Posterior vena cava (tissue), 2 donors: ENCODE measurements at regions of chr14 and their contacts with region 1.

Region 1: DNA sequence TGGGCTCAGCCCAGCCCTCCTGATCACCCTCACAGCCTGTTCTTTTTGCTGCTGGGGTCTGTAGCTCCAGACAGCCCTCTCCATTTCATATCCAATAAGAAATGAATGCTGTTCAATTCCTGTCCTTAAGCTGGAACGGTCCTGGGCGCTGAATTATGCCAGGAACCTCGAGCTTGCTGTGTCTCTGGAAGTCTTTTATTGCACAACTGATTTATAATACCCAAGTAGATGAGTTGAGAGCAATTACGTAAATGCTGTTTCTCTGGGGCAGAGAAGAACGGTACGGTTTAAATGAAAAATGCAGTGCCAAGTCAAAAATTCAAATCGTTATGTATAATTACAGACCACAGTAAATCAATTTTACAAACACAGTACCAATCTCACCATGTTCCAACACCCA is 161.0 kb downstream of the SAMD4A start:
- DNase-seq: no peak

Region 2: DNA sequence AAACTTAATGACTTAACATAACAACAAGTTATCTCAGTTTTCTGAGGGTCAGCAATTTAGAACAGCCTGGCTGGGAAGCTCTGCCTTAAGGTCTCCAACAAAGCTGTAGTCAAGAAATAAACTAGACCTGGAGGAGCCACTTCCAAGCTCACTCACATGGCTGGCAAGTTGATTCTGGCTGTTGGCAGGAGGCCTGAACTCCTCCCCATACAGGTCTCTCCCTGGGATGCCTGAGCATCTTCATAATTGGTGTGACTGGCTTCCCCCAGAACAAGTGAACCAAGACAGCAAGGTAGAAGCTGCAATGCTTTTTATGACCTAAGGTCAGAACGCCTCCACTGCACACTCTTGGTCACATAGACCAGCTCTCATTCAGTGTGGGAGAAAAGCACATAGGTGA is 32.7 kb before region 1 on chr14:
- intact Hi-C with region 1: loop called in 1 of 2 experiments (anchors 1 kb)
- DNase-seq: no peak